ENCODE measurements at regions of chr5 and their contacts with region 1.

Region 1: DNA sequence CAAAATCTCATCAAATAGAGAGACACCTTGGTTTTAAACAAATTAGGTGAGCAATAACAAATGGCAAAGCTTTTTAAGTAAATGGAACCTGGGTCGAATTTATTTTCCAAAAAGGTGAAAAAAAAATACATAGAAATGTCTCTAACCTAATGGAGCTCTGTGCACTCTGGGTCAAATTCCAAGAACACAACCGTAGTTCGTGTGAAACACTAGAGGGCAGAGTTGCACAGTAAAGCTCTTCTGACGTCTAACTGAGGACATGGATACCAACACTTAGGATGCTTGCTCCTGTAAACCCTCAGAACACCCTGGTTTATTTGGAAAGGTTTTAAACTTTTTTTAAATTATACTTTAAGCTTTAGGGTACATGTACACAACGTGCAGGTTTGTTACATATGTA is 18.9 kb downstream of the MARCHF11 start:
- DNase-seq: no peak
- H3K4me3 ChIP-seq: no peak overlapping the region
- H3K27me3 ChIP-seq: no peaks in the 10 kb centered on the region
- CTCF ChIP-seq: peak; percentile 77

Region 2: GRCh38 chr5:16178745-16179372 is 18.2 kb after region 1 on chr5:
- CTCF ChIA-PET with region 1: interaction called, 12 read pairs
- POLR2A ChIA-PET with region 1: no interaction called
- DNase-seq: no peak
- H3K4me3 ChIP-seq: no peak overlapping the region
- H3K27me3 ChIP-seq: peaks cover 10% of the 10 kb centered on the region
- CTCF ChIP-seq: no peak

Region 3: DNA sequence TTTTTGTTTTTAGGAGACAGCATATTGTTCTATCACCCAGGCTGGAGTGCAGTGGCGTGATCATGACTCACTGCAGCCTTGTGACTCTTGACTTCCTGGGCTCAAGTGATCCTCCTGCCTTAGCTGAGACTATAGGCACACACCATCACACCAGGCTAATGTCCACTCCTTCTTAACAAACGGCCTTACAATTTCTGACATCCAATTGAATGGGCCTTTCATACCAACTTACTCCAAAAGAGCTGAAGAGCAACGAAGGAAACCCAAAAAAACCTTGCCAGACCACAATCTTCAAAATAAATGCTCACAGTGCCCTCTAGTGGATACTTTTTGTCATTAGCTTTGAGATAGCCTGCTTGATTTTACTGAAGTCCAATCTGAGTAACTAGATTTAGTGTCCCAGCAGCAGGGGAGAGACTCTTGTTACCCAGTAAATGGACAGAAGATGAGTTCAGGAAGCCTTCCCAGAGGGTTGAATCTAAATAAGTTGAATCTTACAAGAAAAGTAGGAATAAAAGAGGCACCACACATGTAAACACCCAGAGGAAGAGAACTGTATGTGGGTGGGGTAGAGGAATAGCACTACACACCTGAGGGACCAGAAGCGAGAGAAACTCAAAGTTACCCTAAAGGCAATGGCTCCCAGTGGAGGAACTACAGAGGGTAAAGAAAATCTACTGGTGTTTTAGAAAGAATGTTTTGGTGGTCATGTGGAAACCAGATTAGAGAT is 295.6 kb after region 1 on chr5:
- CTCF ChIA-PET with region 1: interaction called, 20 read pairs
- POLR2A ChIA-PET with region 1: no interaction called
- DNase-seq: peak; percentile 19
- H3K4me3 ChIP-seq: no peak overlapping the region
- H3K27me3 ChIP-seq: no peaks in the 10 kb centered on the region
- CTCF ChIP-seq: peak; percentile 56

Measured in BJ (cell line).